Activated B cell treated with CpG ODN at 0.5 μM for 24 hours (primary cell): ENCODE measurements at regions of chr1 and their contacts with region 1.

Region 1: GRCh38 chr1:110106013-110106941 is 6.0 kb upstream of the UBL4B start:
- DNase-seq: peak; percentile 51
- ATAC-seq: peak; percentile 88
- H3K4me3 Mint-ChIP-seq: no peak overlapping the region
- H3K27ac Mint-ChIP-seq: no peak overlapping the region
- H3K4me1 Mint-ChIP-seq: peaks cover 16% of the 10 kb centered on the region
- H3K27me3 Mint-ChIP-seq: peaks cover 13% of the 10 kb centered on the region
- CTCF ChIP-seq: peak; percentile 61

Region 2: DNA sequence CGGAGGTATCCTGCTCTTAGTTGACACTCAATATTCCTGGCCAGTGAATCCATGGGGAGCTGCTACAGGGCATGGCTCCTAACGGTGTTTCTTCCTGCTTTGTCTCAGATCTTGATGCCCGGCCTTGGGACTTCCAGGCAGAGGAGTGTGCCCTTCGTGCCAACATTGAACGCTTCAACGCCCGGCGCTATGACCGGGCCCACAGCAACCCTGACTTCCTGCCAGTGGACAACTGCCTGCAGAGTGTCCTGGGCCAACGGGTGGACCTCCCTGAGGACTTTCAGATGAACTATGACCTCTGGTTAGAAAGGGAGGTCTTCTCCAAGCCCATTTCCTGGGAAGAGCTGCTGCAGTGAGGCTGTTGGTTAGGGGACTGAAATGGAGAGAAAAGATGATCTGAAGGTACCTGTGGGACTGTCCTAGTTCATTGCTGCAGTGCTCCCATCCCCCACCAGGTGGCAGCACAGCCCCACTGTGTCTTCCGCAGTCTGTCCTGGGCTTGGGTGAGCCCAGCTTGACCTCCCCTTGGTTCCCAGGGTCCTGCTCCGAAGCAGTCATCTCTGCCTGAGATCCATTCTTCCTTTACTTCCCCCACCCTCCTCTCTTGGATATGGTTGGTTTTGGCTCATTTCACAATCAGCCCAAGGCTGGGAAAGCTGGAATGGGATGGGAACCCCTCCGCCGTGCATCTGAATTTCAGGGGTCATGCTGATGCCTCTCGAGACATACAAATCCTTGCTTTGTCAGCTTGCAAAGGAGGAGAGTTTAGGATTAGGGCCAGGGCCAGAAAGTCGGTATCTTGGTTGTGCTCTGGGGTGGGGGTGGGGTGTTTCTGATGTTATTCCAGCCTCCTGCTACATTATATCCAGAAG is 52.5 kb before region 1 on chr1:
- CTCF ChIA-PET with region 1: interaction called, 78 read pairs
- POLR2A ChIA-PET with region 1: no interaction called
- intact Hi-C with region 1: loop called (anchors 1 kb)
- DNase-seq: peak; percentile 68
- ATAC-seq: peak; percentile 85
- H3K4me3 Mint-ChIP-seq: no peak overlapping the region
- H3K27ac Mint-ChIP-seq: no peak overlapping the region
- H3K4me1 Mint-ChIP-seq: no peaks in the 10 kb centered on the region
- H3K27me3 Mint-ChIP-seq: no peaks in the 10 kb centered on the region
- CTCF ChIP-seq: peak; percentile 50

Region 3: GRCh38 chr1:110068646-110069403 is 37.5 kb before region 1 on chr1:
- CTCF ChIA-PET with region 1: interaction called, 3 read pairs
- POLR2A ChIA-PET with region 1: no interaction called
- intact Hi-C with region 1: loop called (anchors 5 kb)
- DNase-seq: peak; percentile 40
- ATAC-seq: peak; percentile 29
- H3K4me3 Mint-ChIP-seq: peak overlapping the region; percentile 76
- H3K27ac Mint-ChIP-seq: no peak overlapping the region
- H3K4me1 Mint-ChIP-seq: peaks cover 23% of the 10 kb centered on the region
- H3K27me3 Mint-ChIP-seq: peaks cover 43% of the 10 kb centered on the region
- CTCF ChIP-seq: no peak

Region 4: GRCh38 chr1:110087812-110088738 is 18.2 kb before region 1 on chr1:
- CTCF ChIA-PET with region 1: interaction called, 12 read pairs
- POLR2A ChIA-PET with region 1: no interaction called
- intact Hi-C with region 1: loop called (anchors 1 kb)
- DNase-seq: no peak
- ATAC-seq: peak; percentile 75
- H3K4me3 Mint-ChIP-seq: no peak overlapping the region
- H3K27ac Mint-ChIP-seq: no peak overlapping the region
- H3K4me1 Mint-ChIP-seq: peaks cover 9% of the 10 kb centered on the region
- H3K27me3 Mint-ChIP-seq: peaks cover 21% of the 10 kb centered on the region
- CTCF ChIP-seq: no peak